ENCODE measurements at regions of chr6 and their contacts with region 1.

Region 1: GRCh38 chr6:75893058-75893775 is 144.2 kb downstream of the MYO6 start:
- DNase-seq: peak in 4 of 5 donors; percentile 18 to 33 (median 24)
- H3K4me3 ChIP-seq: no peak overlapping the region
- H3K4me3 Mint-ChIP-seq: peak overlapping the region in 1 of 8 donors; percentile 3
- H3K27ac ChIP-seq: no peak overlapping the region
- H3K27ac Mint-ChIP-seq: no peak overlapping the region
- H3K4me1 ChIP-seq: no peaks in the 10 kb centered on the region
- H3K4me1 Mint-ChIP-seq: peaks cover 0 to 2% (median 1%) of the 10 kb centered on the region in 4 donors
- H3K27me3 ChIP-seq: no peaks in the 10 kb centered on the region
- H3K27me3 Mint-ChIP-seq: no peaks in the 10 kb centered on the region

Region 2: GRCh38 chr6:75874224-75874623 is 19.0 kb before region 1 on chr6:
- CTCF ChIA-PET with region 1: interaction called, 78 read pairs
- POLR2A ChIA-PET with region 1: no interaction called
- intact Hi-C with region 1: no loop called
- DNase-seq: no peak
- H3K4me3 ChIP-seq: no peak overlapping the region
- H3K4me3 Mint-ChIP-seq: no peak overlapping the region
- H3K27ac ChIP-seq: no peak overlapping the region
- H3K27ac Mint-ChIP-seq: no peak overlapping the region
- H3K4me1 ChIP-seq: no peaks in the 10 kb centered on the region
- H3K4me1 Mint-ChIP-seq: no peaks in the 10 kb centered on the region
- H3K27me3 ChIP-seq: no peaks in the 10 kb centered on the region
- H3K27me3 Mint-ChIP-seq: no peaks in the 10 kb centered on the region

Region 3: GRCh38 chr6:75882734-75883133 is 10.5 kb before region 1 on chr6:
- CTCF ChIA-PET with region 1: interaction called, 78 read pairs
- POLR2A ChIA-PET with region 1: interaction called, 3 read pairs
- intact Hi-C with region 1: no loop called
- DNase-seq: no peak
- H3K4me3 ChIP-seq: no peak overlapping the region
- H3K4me3 Mint-ChIP-seq: no peak overlapping the region
- H3K27ac ChIP-seq: no peak overlapping the region
- H3K27ac Mint-ChIP-seq: no peak overlapping the region
- H3K4me1 ChIP-seq: no peaks in the 10 kb centered on the region
- H3K4me1 Mint-ChIP-seq: no peaks in the 10 kb centered on the region
- H3K27me3 ChIP-seq: no peaks in the 10 kb centered on the region
- H3K27me3 Mint-ChIP-seq: no peaks in the 10 kb centered on the region

Region 4: DNA sequence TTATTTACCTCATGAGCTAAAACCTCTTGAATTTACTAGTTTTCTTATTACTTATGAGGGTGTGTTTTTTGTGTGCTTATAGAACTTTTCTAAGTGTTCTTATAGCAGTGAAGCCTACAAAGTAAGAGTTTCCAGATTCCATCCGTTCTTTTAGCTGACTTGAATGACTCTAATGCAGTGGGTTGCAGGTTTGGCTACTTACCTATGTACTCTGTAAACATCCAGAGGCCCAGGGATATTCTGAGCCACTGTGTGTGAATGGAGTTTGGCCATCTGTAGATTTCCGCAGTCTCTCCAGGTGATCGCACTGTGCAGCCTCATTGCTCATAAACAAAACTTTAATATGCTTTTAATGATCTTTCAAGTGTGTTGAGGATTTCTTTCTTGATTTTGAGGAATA is 13.7 kb after region 1 on chr6:
- CTCF ChIA-PET with region 1: interaction called, 20 read pairs
- POLR2A ChIA-PET with region 1: no interaction called
- intact Hi-C with region 1: no loop called
- DNase-seq: no peak
- H3K4me3 ChIP-seq: no peak overlapping the region
- H3K4me3 Mint-ChIP-seq: no peak overlapping the region
- H3K27ac ChIP-seq: no peak overlapping the region
- H3K27ac Mint-ChIP-seq: no peak overlapping the region
- H3K4me1 ChIP-seq: no peaks in the 10 kb centered on the region
- H3K4me1 Mint-ChIP-seq: no peaks in the 10 kb centered on the region
- H3K27me3 ChIP-seq: no peaks in the 10 kb centered on the region
- H3K27me3 Mint-ChIP-seq: no peaks in the 10 kb centered on the region

Region 5: GRCh38 chr6:77457720-77458349 is 1564.6 kb after region 1 on chr6:
- CTCF ChIA-PET with region 1: interaction called, 5 read pairs
- POLR2A ChIA-PET with region 1: no interaction called
- intact Hi-C with region 1: loop called (anchors 2 kb)
- DNase-seq: peak in 1 of 5 donors; percentile 17
- H3K4me3 ChIP-seq: no peak overlapping the region
- H3K4me3 Mint-ChIP-seq: peak overlapping the region in 1 of 8 donors; percentile 18
- H3K27ac ChIP-seq: no peak overlapping the region
- H3K27ac Mint-ChIP-seq: no peak overlapping the region
- H3K4me1 ChIP-seq: no peaks in the 10 kb centered on the region
- H3K4me1 Mint-ChIP-seq: peaks cover under 1 to 9% (median 5%) of the 10 kb centered on the region in 4 donors
- H3K27me3 ChIP-seq: peaks cover 5% of the 10 kb centered on the region
- H3K27me3 Mint-ChIP-seq: peaks cover 15 to 25% of the 10 kb centered on the region in 2 donors